ENCODE measurements at regions of chr9 and their contacts with region 1.

Region 1: GRCh38 chr9:86939321-86939720 is 8.0 kb downstream of the GAS1 start:
- DNase-seq: no peak
- H3K4me3 ChIP-seq: no peak overlapping the region
- H3K27ac ChIP-seq: no peak overlapping the region
- H3K4me1 ChIP-seq: peaks cover 7% of the 10 kb centered on the region
- H3K27me3 ChIP-seq: no peaks in the 10 kb centered on the region
- CTCF ChIP-seq: no peak
- POLR2A ChIP-seq: no peak

Region 2: GRCh38 chr9:86997158-86997557 is 57.8 kb after region 1 on chr9:
- intact Hi-C with region 1: loop called (anchors 10 kb)
- DNase-seq: no peak
- H3K4me3 ChIP-seq: no peak overlapping the region
- H3K27ac ChIP-seq: no peak overlapping the region
- H3K4me1 ChIP-seq: no peaks in the 10 kb centered on the region
- H3K27me3 ChIP-seq: no peaks in the 10 kb centered on the region
- CTCF ChIP-seq: peak in 2 of 4 experiments; percentile 4 to 27
- POLR2A ChIP-seq: no peak

Region 3: DNA sequence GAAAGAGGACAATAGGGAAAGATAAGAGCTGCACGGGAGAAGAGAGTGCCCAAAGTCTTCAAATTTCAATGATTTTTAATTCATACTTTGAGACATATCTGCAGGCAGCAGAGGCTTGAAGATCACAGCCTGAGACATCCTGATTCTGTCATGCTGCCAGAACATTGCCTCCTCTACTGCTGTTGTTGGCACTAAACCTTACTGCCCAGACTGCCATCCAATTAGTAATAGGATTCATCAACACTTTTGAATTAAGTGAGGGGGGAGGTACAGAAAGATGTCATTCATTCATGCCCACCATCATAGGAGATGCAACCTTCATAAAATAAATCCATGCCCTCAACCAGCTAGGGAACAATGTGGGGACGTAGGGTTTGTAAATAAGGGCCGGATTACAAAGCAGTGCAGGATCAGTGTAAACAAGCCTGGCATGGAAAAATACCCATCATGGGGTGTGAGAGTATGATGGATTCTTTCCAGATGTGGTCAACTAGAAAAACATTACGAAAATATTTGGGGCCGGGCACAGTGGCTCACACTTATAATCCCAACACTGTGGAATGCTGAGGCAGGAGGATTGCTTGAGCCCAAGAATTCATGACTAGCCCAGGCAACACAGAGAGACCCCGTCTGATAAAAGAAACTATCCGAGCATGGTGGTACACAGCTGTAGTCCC is 436.2 kb after region 1 on chr9:
- intact Hi-C with region 1: no loop called
- DNase-seq: no peak
- H3K4me3 ChIP-seq: no peak overlapping the region
- H3K27ac ChIP-seq: no peak overlapping the region
- H3K4me1 ChIP-seq: no peaks in the 10 kb centered on the region
- H3K27me3 ChIP-seq: no peaks in the 10 kb centered on the region
- CTCF ChIP-seq: no peak
- POLR2A ChIP-seq: no peak

Measured in prostate gland (tissue), 2 donors.